ENCODE measurements at regions of chr11 and their contacts with region 1.

Region 1: DNA sequence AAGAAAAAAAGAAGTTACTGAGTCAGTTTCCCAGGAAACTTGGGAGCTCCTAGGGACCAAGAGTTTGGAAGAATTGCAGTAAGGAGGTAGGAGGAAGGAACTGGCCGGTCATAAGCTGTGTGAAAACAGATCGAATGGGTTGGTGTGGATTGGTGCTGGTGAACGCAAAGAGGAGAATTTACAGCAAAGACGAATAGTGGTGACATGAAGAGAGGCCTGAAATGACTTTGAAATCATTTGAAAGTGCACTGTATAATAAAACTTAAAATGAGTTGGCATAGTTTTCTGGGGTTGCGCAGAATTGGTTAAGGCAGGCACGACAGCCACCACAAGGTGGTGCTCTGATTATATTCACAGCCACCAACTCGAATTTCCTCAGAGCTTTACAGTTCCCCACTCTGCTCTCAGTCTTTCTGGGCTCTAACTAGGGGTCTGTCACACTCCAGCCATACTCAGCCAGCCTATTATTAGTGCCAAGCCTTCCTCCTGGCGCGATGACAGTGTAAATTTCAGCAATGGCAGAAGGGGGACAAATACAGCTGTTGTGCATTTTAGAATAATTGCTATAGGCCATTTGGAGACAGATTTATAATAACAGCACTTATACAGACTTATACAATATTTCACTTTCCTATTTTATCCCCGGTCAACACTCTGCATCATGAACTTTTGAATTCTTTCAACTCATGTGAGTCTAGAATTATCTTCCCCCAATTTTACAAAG is 8.3 kb upstream of the HTR3B start:
- DNase-seq: no peak
- ATAC-seq: peak; percentile 65
- H3K4me3 ChIP-seq: no peak overlapping the region
- H3K27ac ChIP-seq: no peak overlapping the region
- H3K4me1 ChIP-seq: no peaks in the 10 kb centered on the region
- H3K27me3 ChIP-seq: no peaks in the 10 kb centered on the region

Region 2: DNA sequence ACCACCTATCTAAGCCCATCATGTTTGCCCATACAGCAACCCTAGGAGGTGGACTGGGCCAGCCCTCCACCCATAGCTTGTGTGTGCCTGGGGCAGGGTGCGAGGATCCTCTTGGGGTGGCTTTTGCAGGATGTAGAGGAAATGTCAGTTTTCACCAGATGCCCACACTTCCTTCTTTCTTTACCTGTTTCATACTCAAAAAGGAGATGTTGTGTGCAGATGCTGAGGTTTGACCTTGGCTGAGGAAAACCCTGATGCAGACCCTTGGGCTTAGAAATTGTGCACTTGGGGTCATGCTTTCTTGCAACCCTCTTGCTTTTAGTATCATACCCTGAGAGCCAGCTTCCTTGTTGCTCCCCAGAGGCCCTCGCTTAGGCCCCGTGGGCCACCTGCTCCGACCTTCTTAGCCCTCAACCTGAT is 80.8 kb after region 1 on chr11:
- intact Hi-C with region 1: no loop called
- DNase-seq: no peak
- ATAC-seq: no peak
- H3K4me3 ChIP-seq: no peak overlapping the region
- H3K27ac ChIP-seq: no peak overlapping the region
- H3K4me1 ChIP-seq: no peaks in the 10 kb centered on the region
- H3K27me3 ChIP-seq: no peaks in the 10 kb centered on the region

Region 3: GRCh38 chr11:113994077-113994954 is 98.0 kb after region 1 on chr11:
- intact Hi-C with region 1: loop called in 1 of 2 experiments (anchors 10 kb)
- DNase-seq: no peak
- ATAC-seq: no peak
- H3K4me3 ChIP-seq: no peak overlapping the region
- H3K27ac ChIP-seq: no peak overlapping the region
- H3K4me1 ChIP-seq: no peaks in the 10 kb centered on the region
- H3K27me3 ChIP-seq: no peaks in the 10 kb centered on the region

Region 4: DNA sequence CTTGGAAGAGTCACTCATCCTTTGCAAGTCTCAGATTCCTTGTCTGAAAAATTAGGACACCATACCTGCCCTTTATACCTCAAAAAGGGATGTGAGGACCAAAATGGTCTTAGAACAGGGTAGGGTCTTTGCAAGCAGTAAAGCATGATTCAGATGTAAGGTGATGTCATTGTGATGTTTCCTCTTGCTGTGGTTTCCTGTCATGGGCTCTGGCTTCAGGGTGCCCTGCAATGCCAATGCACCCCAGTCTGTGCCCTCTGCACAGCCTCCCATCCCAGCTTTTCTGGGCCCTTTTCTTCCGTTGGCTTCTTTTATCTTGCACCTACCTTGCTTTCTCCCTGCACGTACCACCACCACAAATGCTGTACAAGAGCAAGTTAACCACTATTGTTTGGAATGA is 312.1 kb after region 1 on chr11:
- intact Hi-C with region 1: loop called in 1 of 2 experiments (anchors 10 kb)
- DNase-seq: no peak
- ATAC-seq: no peak
- H3K4me3 ChIP-seq: no peak overlapping the region
- H3K27ac ChIP-seq: no peak overlapping the region
- H3K4me1 ChIP-seq: peaks cover 2 to 3% of the 10 kb centered on the region in 2 donors
- H3K27me3 ChIP-seq: no peaks in the 10 kb centered on the region

Region 5: GRCh38 chr11:114262681-114263512 is 366.6 kb after region 1 on chr11:
- intact Hi-C with region 1: loop called (anchors 1 to 5 kb)
- DNase-seq: no peak
- ATAC-seq: peak; percentile 39
- H3K4me3 ChIP-seq: no peak overlapping the region
- H3K27ac ChIP-seq: no peak overlapping the region
- H3K4me1 ChIP-seq: no peaks in the 10 kb centered on the region
- H3K27me3 ChIP-seq: no peaks in the 10 kb centered on the region

Measured in aorta (tissue), 5 donors.